Esophagus squamous epithelium (tissue), 5 donors: ENCODE measurements at regions of chr16 and their contacts with region 1.

Region 1: GRCh38 chr16:67415872-67416793 is at the start of gene ZDHHC1:
- DNase-seq: no peak
- H3K4me3 ChIP-seq: peak within 1 kb of the TSS; percentile 54 to 83 (median 62)
- H3K27ac ChIP-seq: peak within 1 kb of the TSS; percentile 76 to 84 (median 81)
- H3K4me1 ChIP-seq: peaks cover 0 to 36% (median 15%) of the 10 kb centered on the region in 3 donors
- H3K27me3 ChIP-seq: no peaks in the 10 kb centered on the region
- CTCF ChIP-seq: peak; percentile 41 to 79 (median 68)
- POLR2A ChIP-seq: peak in 2 of 4 donors; percentile 18 to 38
- total RNA-seq, gene ZDHHC1: 2.5 to 11.1 (median 3.8) TPM

Region 2: GRCh38 chr16:67279296-67280089 is 136.6 kb before region 1 on chr16 and contains the start of gene PLEKHG4:
- intact Hi-C with region 1: loop called (anchors 10 kb)
- DNase-seq: no peak
- H3K4me3 ChIP-seq: peak within 1 kb of the TSS; percentile 53 to 83 (median 70)
- H3K27ac ChIP-seq: peak within 1 kb of the TSS; percentile 46 to 83 (median 76)
- H3K4me1 ChIP-seq: peaks cover 20 to 40% (median 23%) of the 10 kb centered on the region in 3 donors
- H3K27me3 ChIP-seq: no peaks in the 10 kb centered on the region
- CTCF ChIP-seq: peak; percentile 51 to 93 (median 83)
- POLR2A ChIP-seq: peak in 1 of 4 donors; percentile 19
- total RNA-seq, gene PLEKHG4: 5.0 to 11.4 (median 7.5) TPM

Region 3: GRCh38 chr16:67311607-67312488 is 104.3 kb before region 1 on chr16:
- intact Hi-C with region 1: no loop called
- DNase-seq: no peak
- H3K4me3 ChIP-seq: no peak overlapping the region
- H3K27ac ChIP-seq: peak overlapping the region in 3 of 4 donors; percentile 9 to 60 (median 42)
- H3K4me1 ChIP-seq: peaks cover 0 to 5% (median 0%) of the 10 kb centered on the region in 3 donors
- H3K27me3 ChIP-seq: peaks cover 0 to 3% (median 0%) of the 10 kb centered on the region in 4 donors
- CTCF ChIP-seq: no peak
- POLR2A ChIP-seq: no peak

Region 4: GRCh38 chr16:67372664-67373063 is 43.5 kb before region 1 on chr16:
- intact Hi-C with region 1: loop called (anchors 5 kb)
- DNase-seq: no peak
- H3K4me3 ChIP-seq: no peak overlapping the region
- H3K27ac ChIP-seq: no peak overlapping the region
- H3K4me1 ChIP-seq: no peaks in the 10 kb centered on the region
- H3K27me3 ChIP-seq: no peaks in the 10 kb centered on the region
- CTCF ChIP-seq: peak in 5 of 6 experiments; percentile 40 to 67 (median 46)
- POLR2A ChIP-seq: no peak

Region 5: DNA sequence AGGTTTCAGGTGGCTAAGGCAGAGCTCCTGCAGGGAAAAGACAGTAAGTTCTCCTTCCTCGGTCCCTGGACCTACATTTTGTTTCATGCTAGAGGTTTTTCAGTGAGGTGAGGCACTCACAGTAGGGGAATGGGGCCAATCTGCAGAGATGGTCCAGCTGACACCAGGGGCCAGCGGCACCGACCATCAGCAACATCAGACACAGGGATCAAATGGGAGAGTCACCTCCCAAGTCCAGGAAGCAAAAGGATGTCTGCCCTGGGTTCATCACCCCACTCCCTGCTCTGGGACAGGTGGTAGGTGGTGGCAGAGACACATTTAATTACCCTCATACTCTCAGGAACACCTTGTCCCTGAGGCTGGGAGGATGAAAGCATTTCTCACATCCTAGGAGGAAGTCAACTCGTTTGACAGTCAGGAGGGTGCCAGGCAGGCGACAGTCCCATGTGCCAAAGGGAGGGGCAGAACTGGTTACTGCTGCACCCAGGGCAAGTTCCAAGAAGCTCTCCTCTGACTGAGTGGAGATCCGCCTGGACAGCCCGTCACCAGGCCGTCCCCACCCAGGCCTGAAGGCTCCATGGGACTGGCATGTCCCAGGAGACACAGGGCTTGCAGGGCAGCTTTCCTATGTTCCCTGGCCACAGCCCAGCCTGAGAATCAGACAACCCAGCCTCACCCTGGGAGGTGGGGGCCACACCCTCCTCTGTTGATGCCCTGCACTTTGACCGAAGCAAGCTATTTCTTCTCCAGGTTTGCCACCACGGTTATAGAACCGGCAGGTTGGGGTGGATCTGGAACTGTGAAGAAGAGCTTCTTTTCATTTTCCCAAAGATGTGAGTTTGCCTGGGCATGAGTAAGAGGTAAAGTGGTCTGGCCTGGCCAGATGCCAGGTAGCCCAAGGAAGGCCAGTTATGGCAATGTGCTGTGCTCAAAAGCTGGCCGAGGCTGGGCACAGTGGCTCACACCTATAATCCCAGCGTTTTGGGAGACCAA is 45.8 kb after region 1 on chr16:
- intact Hi-C with region 1: loop called (anchors 5 kb)
- DNase-seq: no peak
- H3K4me3 ChIP-seq: no peak overlapping the region
- H3K27ac ChIP-seq: peak overlapping the region; percentile 73 to 88 (median 82)
- H3K4me1 ChIP-seq: peaks cover 67 to 92% (median 69%) of the 10 kb centered on the region in 3 donors
- H3K27me3 ChIP-seq: no peaks in the 10 kb centered on the region
- CTCF ChIP-seq: no peak
- POLR2A ChIP-seq: peak in 1 of 4 donors; percentile 35